ENCODE measurements at regions of chr13 and their contacts with region 1.

Region 1: DNA sequence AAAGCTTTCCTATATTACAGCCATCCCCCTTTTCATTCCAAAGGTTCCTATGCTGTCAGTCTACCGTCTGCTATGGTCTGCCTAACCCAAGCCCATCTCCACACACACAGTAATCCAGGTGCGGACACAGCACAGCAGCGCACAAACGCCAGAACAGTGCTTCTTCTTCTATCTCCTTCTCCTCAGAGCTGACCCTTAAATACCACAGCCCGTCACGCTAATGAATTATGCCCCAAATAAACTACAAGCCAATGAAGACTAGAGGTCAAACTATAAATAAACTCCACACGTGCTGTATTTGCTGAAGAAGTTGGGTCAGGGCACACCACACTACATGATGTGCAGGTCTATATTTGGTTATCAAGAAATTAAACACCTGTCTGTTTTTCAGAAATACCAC is 71.8 kb downstream of the TBC1D4 start:
- DNase-seq: peak in 1 of 2 donors; percentile 61
- ATAC-seq: peak; percentile 90 to 94 (median 92)
- H3K4me3 ChIP-seq: peak overlapping the region; percentile 48
- H3K27ac ChIP-seq: peak overlapping the region; percentile 83
- H3K4me1 ChIP-seq: peaks cover 37% of the 10 kb centered on the region
- H3K27me3 ChIP-seq: no peaks in the 10 kb centered on the region
- CTCF ChIP-seq: no peak

Region 2: GRCh38 chr13:75091718-75092117 is 318.5 kb before region 1 on chr13:
- intact Hi-C with region 1: no loop called
- DNase-seq: no peak
- ATAC-seq: no peak
- H3K4me3 ChIP-seq: no peak overlapping the region
- H3K27ac ChIP-seq: no peak overlapping the region
- H3K4me1 ChIP-seq: no peaks in the 10 kb centered on the region
- H3K27me3 ChIP-seq: no peaks in the 10 kb centered on the region
- CTCF ChIP-seq: no peak

Region 3: GRCh38 chr13:75170311-75170710 is 239.9 kb before region 1 on chr13:
- intact Hi-C with region 1: no loop called
- DNase-seq: no peak
- ATAC-seq: no peak
- H3K4me3 ChIP-seq: no peak overlapping the region
- H3K27ac ChIP-seq: no peak overlapping the region
- H3K4me1 ChIP-seq: no peaks in the 10 kb centered on the region
- H3K27me3 ChIP-seq: no peaks in the 10 kb centered on the region
- CTCF ChIP-seq: no peak

Region 4: DNA sequence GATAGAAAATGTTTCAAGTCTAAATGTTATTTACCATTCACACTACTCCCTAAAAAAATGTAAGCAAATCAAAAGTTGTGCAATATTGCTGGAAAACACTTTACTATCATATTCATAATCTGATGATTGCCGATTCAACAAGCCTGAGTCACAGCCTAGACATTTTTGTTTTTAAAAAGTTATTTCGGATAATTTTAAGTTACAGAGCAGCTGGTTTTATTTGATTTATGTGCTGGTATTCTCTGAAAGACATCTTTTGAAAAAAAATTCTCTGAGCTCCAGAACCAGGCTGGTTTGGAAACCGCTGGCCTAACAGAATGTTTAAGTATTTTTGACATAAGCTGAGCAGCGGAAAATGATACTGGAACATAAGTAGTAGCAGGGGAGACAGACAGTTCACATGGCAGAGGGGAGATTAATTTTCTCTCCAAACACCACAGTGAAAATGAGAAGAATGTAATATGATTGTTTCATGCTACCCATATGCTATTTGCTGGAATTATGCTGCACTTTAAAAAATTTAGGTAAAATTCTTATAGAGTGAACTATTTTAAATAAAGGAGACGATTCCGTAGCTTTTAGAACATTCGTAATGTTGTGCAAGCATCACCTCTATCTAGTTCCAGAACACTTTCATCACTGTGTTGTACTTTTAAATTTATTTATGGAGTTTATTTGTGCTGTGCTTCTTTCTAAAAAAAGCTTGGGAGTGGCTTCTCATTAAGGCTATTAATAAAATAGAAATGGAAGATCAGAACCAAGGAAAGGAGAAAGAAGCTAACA is 35.7 kb after region 1 on chr13:
- intact Hi-C with region 1: loop called in 1 of 2 experiments (anchors 5 kb)
- DNase-seq: no peak
- ATAC-seq: peak; percentile 76 to 90 (median 88)
- H3K4me3 ChIP-seq: peak overlapping the region; percentile 58
- H3K27ac ChIP-seq: peak overlapping the region; percentile 84
- H3K4me1 ChIP-seq: peaks cover 43% of the 10 kb centered on the region
- H3K27me3 ChIP-seq: no peaks in the 10 kb centered on the region
- CTCF ChIP-seq: no peak

Measured in psoas muscle (tissue), 8 donors.